ENCODE measurements at regions of chr17 and their contacts with region 1.

Region 1: GRCh38 chr17:55845385-55845784 is 94.5 kb downstream of the PCTP start:
- H3K4me3 Mint-ChIP-seq: no peak overlapping the region
- H3K27ac Mint-ChIP-seq: no peak overlapping the region
- H3K4me1 Mint-ChIP-seq: peaks cover 5% of the 10 kb centered on the region
- H3K27me3 Mint-ChIP-seq: peaks cover 12% of the 10 kb centered on the region

Region 2: GRCh38 chr17:56319517-56319916 is 474.1 kb after region 1 on chr17:
- intact Hi-C with region 1: loop called (anchors 10 kb)
- H3K4me3 Mint-ChIP-seq: no peak overlapping the region
- H3K27ac Mint-ChIP-seq: no peak overlapping the region
- H3K4me1 Mint-ChIP-seq: no peaks in the 10 kb centered on the region
- H3K27me3 Mint-ChIP-seq: no peaks in the 10 kb centered on the region

Region 3: GRCh38 chr17:56478836-56479447 is 633.6 kb after region 1 on chr17:
- intact Hi-C with region 1: loop called (anchors 5 kb)
- H3K4me3 Mint-ChIP-seq: no peak overlapping the region
- H3K27ac Mint-ChIP-seq: no peak overlapping the region
- H3K4me1 Mint-ChIP-seq: no peaks in the 10 kb centered on the region
- H3K27me3 Mint-ChIP-seq: no peaks in the 10 kb centered on the region